ENCODE measurements at regions of chr12 and their contacts with region 1.

Region 1: GRCh38 chr12:26126340-26127284 is 1.8 kb upstream of the BHLHE41 start:
- DNase-seq: peak; percentile 64
- H3K4me3 ChIP-seq: peak overlapping the region; percentile 39 to 64 (median 49)
- H3K27ac ChIP-seq: no peak overlapping the region
- H3K4me1 ChIP-seq: peaks cover 23% of the 10 kb centered on the region
- H3K27me3 ChIP-seq: peaks cover 35 to 60% of the 10 kb centered on the region in 2 experiments
- CTCF ChIP-seq: no peak
- POLR2A ChIP-seq: no peak

Region 2: DNA sequence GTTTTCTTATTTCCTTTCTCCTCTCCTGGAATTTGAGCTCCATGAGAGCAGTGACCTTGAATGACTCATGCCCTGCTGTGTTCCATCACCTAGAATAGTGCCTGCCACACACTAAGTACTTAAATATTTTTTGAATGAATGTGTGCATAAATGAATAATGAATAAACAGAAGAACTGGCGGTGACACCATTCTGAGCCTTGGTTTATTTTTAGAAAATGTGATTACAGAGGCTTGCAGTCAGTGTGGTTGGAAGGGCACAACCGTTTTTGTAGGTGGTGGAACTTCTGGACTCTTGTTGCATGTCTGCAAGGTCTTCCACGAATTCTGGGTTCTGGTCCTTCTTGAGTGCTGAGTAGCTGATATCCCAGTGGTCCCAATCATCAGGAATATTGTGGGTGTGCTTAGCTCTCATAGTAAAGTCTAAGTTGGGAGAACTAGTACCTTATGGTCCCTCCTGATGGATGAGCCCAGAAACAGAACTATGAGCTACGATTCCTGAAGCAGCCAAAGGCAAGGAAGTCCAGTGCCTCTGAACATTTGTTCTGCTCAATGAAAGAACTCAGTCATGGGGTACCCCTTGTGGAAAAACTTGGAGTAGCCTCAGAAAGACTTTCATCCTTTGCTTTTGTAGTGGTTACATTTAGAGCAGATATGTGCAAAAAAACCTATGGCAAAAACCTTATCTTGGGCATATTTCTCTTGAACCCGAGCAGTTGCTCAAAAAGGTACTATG is 27.0 kb after region 1 on chr12:
- CTCF ChIA-PET with region 1: interaction called, 19 read pairs
- POLR2A ChIA-PET with region 1: no interaction called
- dilution Hi-C with region 1: no loop called
- intact Hi-C with region 1: loop called (anchors 1 kb)
- DNase-seq: peak; percentile 88
- H3K4me3 ChIP-seq: no peak overlapping the region
- H3K27ac ChIP-seq: peak overlapping the region; percentile 42
- H3K4me1 ChIP-seq: peaks cover 24% of the 10 kb centered on the region
- H3K27me3 ChIP-seq: no peaks in the 10 kb centered on the region
- CTCF ChIP-seq: no peak
- POLR2A ChIP-seq: no peak

Region 3: GRCh38 chr12:26205941-26206340 is 79.3 kb after region 1 on chr12:
- CTCF ChIA-PET with region 1: no interaction called
- POLR2A ChIA-PET with region 1: no interaction called
- dilution Hi-C with region 1: no loop called
- intact Hi-C with region 1: no loop called
- DNase-seq: no peak
- H3K4me3 ChIP-seq: no peak overlapping the region
- H3K27ac ChIP-seq: no peak overlapping the region
- H3K4me1 ChIP-seq: no peaks in the 10 kb centered on the region
- H3K27me3 ChIP-seq: peaks cover 9 to 14% of the 10 kb centered on the region in 2 experiments
- CTCF ChIP-seq: no peak
- POLR2A ChIP-seq: no peak

Region 4: DNA sequence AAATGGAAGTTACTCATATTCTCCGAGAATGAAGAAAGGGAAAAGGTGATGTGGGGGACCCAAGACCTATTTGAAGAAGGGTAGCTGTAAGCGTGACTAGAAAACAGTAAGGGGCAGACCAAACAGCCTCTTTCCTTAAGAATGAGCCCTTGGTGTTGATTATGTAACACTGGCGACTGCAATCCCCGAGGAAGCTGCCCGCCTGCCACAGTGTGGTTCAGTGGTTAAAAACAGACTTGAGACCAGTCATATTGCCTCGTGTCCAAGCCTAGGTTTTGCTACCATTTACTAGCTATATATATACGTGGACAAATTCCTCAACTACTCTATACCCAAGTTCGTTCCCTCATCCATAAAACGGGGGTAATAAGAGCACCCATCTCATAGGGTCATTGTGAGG is 117.9 kb after region 1 on chr12:
- CTCF ChIA-PET with region 1: no interaction called
- POLR2A ChIA-PET with region 1: no interaction called
- dilution Hi-C with region 1: no loop called
- intact Hi-C with region 1: no loop called
- DNase-seq: no peak
- H3K4me3 ChIP-seq: no peak overlapping the region
- H3K27ac ChIP-seq: no peak overlapping the region
- H3K4me1 ChIP-seq: no peaks in the 10 kb centered on the region
- H3K27me3 ChIP-seq: peaks cover 8 to 9% of the 10 kb centered on the region in 2 experiments
- CTCF ChIP-seq: no peak
- POLR2A ChIP-seq: no peak

Region 5: GRCh38 chr12:26274441-26275312 is 148.1 kb after region 1 on chr12:
- CTCF ChIA-PET with region 1: interaction called, 9 read pairs
- POLR2A ChIA-PET with region 1: no interaction called
- dilution Hi-C with region 1: no loop called
- intact Hi-C with region 1: loop called (anchors 1 kb)
- DNase-seq: peak; percentile 98
- H3K4me3 ChIP-seq: no peak overlapping the region
- H3K27ac ChIP-seq: peak overlapping the region; percentile 93
- H3K4me1 ChIP-seq: peaks cover 34% of the 10 kb centered on the region
- H3K27me3 ChIP-seq: no peaks in the 10 kb centered on the region
- CTCF ChIP-seq: no peak
- POLR2A ChIP-seq: peak; percentile 57

Region 6: DNA sequence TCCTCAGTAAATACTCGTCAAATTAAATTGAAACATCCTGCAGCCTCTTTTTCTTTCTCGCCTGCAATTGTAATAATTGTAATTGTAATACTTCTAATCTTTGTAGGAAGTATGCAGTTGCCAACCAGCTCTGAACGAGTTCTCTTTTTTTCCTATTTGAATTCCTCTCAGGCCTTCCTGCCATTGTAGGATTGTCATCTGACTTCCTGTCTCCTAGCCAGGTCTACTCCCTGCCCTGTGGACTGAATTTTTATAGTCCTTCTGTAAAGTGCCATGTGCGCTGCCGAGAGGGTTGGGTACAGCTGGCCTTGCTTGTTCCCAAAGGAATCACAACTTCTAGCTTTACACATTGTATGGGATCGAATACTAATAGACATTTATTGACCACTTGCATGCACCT is 252.1 kb after region 1 on chr12:
- CTCF ChIA-PET with region 1: interaction called, 7 read pairs
- POLR2A ChIA-PET with region 1: no interaction called
- dilution Hi-C with region 1: no loop called
- intact Hi-C with region 1: loop called (anchors 2 kb)
- DNase-seq: peak; percentile 89
- H3K4me3 ChIP-seq: no peak overlapping the region
- H3K27ac ChIP-seq: peak overlapping the region; percentile 49
- H3K4me1 ChIP-seq: peaks cover 16% of the 10 kb centered on the region
- H3K27me3 ChIP-seq: no peaks in the 10 kb centered on the region
- CTCF ChIP-seq: no peak
- POLR2A ChIP-seq: peak; percentile 41

Region 7: GRCh38 chr12:26614020-26614616 is 487.5 kb after region 1 on chr12:
- CTCF ChIA-PET with region 1: interaction called, 10 read pairs
- POLR2A ChIA-PET with region 1: no interaction called
- dilution Hi-C with region 1: no loop called
- intact Hi-C with region 1: no loop called
- DNase-seq: peak; percentile 39
- H3K4me3 ChIP-seq: no peak overlapping the region
- H3K27ac ChIP-seq: no peak overlapping the region
- H3K4me1 ChIP-seq: no peaks in the 10 kb centered on the region
- H3K27me3 ChIP-seq: no peaks in the 10 kb centered on the region
- CTCF ChIP-seq: peak; percentile 50 to 52
- POLR2A ChIP-seq: no peak